Mammary epithelial cell (primary cell): ENCODE measurements at regions of chr4 and their contacts with region 1.

Region 1: DNA sequence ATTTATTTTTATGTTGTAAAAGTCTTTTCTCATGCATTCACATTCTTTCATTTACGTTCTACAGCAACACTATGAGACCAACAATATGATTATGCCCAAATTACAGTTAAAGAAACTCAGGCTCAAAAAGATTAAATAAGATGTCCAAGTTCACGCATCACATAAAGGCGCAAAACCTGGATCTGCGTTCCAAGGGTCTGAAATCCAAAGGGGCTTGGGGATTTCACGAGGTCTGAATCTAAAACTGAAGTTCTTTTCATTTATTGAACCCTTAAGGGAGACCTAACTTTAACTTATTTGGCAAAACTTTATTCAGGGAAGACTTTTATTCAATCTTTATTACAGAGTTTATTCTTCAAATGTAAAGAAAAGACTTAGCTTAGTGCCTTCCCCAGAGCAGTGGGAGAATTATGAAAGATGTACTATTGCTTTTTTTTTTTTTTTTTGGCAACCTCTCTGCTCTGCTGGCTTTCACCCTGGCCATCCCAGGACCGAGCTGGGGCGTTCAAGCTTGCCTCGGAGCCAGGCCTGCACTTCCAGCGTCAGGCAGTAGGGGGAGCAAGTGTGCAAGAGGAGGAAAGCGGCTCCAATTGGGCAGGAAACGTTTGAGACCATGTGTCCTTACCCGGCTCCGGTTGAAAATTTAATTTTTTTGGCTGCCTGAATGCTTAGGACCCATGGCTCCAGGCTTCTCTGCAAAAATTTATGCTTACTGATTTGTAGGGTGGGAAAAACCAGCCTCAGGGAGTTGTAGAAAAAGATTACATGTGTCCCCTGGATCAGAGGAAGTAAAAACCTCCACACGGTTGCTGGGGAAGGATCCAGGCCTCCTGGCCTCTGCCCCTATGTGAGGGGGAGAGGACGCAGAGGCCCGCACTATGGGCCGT is 344.3 kb upstream of the KLF3 start:
- DNase-seq: peak; percentile 84
- H3K4me3 ChIP-seq: no peak overlapping the region
- H3K27ac ChIP-seq: peak overlapping the region; percentile 79
- H3K4me1 ChIP-seq: peaks cover 26% of the 10 kb centered on the region
- H3K27me3 ChIP-seq: no peaks in the 10 kb centered on the region
- CTCF ChIP-seq: peak; percentile 98 to 99

Region 2: GRCh38 chr4:38078590-38079421 is 240.9 kb before region 1 on chr4:
- CTCF ChIA-PET with region 1: no interaction called
- dilution Hi-C with region 1: loop called (anchors 25 kb)
- in situ Hi-C with region 1: loop called in 1 of 2 experiments (anchors 25 kb)
- intact Hi-C with region 1: no loop called
- DNase-seq: peak; percentile 74
- H3K4me3 ChIP-seq: no peak overlapping the region
- H3K27ac ChIP-seq: no peak overlapping the region
- H3K4me1 ChIP-seq: peaks cover 12% of the 10 kb centered on the region
- H3K27me3 ChIP-seq: no peaks in the 10 kb centered on the region
- CTCF ChIP-seq: no peak

Region 3: DNA sequence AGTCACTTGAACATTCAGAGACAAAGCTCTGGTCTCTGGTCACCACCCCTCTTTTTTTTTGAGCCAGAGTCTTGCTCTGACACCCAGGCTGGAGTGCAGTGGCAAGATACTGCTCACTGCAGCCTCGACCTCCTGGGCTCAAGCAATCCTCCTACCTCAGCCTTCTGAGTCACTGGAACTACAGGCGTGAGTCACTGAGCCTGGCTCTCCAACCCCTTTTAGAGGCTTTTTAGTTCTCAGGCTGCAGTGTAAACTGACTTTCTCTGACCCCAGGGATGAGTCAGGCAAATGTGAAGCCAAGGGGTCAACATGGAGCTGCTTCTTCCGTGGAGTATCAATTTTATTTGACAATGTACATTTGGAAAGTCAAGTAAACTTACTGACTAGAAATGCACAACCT is 130.3 kb before region 1 on chr4:
- CTCF ChIA-PET with region 1: interaction called, 3 read pairs
- dilution Hi-C with region 1: loop called (anchors 25 kb)
- in situ Hi-C with region 1: loop called (anchors 5 kb)
- intact Hi-C with region 1: loop called (anchors 2 kb)
- DNase-seq: peak; percentile 92
- H3K4me3 ChIP-seq: no peak overlapping the region
- H3K27ac ChIP-seq: peak overlapping the region; percentile 92
- H3K4me1 ChIP-seq: peaks cover 44% of the 10 kb centered on the region
- H3K27me3 ChIP-seq: no peaks in the 10 kb centered on the region
- CTCF ChIP-seq: no peak

Region 4: GRCh38 chr4:38455092-38455862 is 135.6 kb after region 1 on chr4:
- CTCF ChIA-PET with region 1: no interaction called
- dilution Hi-C with region 1: no loop called
- in situ Hi-C with region 1: no loop called
- intact Hi-C with region 1: no loop called
- DNase-seq: no peak
- H3K4me3 ChIP-seq: no peak overlapping the region
- H3K27ac ChIP-seq: no peak overlapping the region
- H3K4me1 ChIP-seq: no peaks in the 10 kb centered on the region
- H3K27me3 ChIP-seq: no peaks in the 10 kb centered on the region
- CTCF ChIP-seq: no peak

Region 5: GRCh38 chr4:38675146-38676121 is 355.7 kb after region 1 on chr4:
- CTCF ChIA-PET with region 1: interaction called, 9 read pairs
- dilution Hi-C with region 1: no loop called
- in situ Hi-C with region 1: loop called (anchors 5 kb)
- intact Hi-C with region 1: loop called (anchors 1 kb)
- DNase-seq: peak; percentile 68
- H3K4me3 ChIP-seq: no peak overlapping the region
- H3K27ac ChIP-seq: peak overlapping the region; percentile 82
- H3K4me1 ChIP-seq: peaks cover 52% of the 10 kb centered on the region
- H3K27me3 ChIP-seq: no peaks in the 10 kb centered on the region
- CTCF ChIP-seq: peak; percentile 89 to 94